Breast epithelium (tissue), 4 donors: ENCODE measurements at regions of chr14 and their contacts with region 1.

Region 1: DNA sequence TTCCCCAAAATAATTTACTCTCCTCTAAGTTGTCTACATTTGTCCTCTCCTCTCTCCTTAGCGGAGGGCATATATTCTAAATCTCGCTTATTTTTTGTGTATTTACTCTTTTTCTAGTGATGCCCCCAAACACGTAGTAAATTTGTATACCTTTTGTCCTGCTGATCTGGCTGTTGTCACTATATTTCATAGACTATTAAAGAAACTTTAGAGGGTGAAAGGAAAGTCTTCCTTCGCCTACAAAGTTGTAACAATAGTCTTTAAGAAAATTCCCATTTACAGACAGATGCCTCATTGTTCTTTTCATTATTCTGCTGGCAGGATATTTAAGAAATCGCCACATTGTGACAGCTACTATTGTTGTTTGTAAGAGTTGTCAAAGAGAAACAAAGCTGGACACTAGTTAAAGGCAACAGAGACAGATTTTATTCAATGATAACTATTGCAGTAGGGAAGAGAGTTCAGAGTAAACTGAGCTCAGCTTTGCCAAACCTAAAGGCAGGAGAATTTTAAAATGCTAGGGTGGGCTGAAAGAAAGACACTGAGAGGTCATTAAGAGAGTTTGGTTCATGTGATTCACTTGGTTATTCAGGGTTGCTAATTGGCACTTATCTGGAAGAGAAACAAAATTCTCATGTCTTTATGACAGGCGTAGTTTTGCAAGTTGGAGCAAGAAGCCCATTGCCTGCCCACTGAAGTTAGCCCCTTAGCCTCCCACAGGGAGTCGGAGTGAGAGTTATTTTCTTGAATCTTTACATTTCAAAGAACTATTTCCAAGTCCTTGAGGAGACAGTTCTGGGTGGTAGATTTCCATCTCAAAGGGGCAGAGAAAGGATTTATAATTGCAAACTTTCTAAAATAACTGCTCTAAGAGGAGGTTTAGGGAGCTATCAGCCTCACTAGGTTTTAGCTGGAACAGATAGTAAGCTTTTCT is 1272.5 kb upstream of the SEL1L start:
- DNase-seq: no peak
- H3K4me3 ChIP-seq: no peak overlapping the region
- H3K27ac ChIP-seq: no peak overlapping the region
- H3K4me1 ChIP-seq: no peaks in the 10 kb centered on the region
- H3K27me3 ChIP-seq: no peaks in the 10 kb centered on the region
- CTCF ChIP-seq: no peak
- POLR2A ChIP-seq: no peak

Region 2: DNA sequence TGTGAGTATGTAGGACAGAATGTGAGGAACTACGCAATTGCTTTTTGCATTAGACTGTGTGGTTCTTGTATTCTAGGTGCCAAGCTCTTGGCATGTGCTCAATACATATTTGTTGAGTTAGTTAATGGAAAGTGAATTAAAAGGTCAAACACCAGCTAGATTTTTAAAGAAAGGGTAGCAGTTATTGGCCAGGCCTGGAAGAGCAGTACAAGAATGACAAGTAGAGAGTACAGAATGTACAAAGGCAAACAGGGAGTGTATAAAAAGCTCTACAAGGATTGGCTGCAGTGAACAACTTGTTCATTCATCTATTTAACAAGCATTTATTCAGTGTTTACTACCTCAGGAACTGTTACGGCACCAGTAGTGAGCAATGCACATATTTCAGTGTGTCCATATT is 418.5 kb before region 1 on chr14:
- intact Hi-C with region 1: loop called (anchors 5 kb)
- DNase-seq: peak in 1 of 2 donors; percentile 22
- H3K4me3 ChIP-seq: no peak overlapping the region
- H3K27ac ChIP-seq: peak overlapping the region in 1 of 2 donors; percentile 16
- H3K4me1 ChIP-seq: no peaks in the 10 kb centered on the region
- H3K27me3 ChIP-seq: no peaks in the 10 kb centered on the region
- CTCF ChIP-seq: no peak
- POLR2A ChIP-seq: no peak